Heart left ventricle (tissue), 16 donors: ENCODE measurements at regions of chr2 and their contacts with region 1.

Region 1: DNA sequence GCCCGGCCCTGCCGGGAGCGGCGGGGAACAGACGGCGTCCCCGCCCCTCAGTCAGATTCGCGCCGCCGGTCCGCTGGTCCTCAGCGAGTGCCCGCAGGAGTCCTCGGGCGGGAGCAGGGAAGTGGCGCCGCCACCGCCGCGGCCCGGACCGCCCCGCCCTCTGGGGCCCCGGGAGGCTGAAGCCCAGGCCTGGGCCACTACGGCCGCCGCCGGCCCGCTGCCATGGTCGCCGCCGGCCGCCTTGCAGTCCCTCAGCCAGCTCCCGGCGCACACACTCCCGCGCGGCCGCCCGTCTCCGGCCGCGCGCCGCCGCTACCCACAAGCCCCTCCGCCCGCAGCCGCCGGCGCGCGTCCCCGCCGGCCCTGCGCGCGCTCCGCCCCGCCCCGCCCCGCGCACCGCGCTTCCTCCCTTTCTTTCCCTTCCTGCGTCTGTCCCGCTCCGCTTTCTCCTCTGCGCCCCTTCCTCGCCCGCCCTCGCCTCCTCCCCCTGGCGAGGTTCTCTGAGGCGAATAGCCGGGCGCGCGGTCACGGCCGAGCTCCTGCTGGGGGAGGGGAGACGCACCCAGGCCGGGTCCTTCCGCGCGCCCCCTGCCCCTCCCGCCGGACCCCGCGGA is at the start of gene ROCK2:
- DNase-seq: peak; percentile 90 to 93 (median 91)
- ATAC-seq: peak; percentile 84 to 92 (median 86)
- H3K4me3 ChIP-seq: peak within 1 kb of the TSS; percentile 69 to 100 (median 94)
- H3K27ac ChIP-seq: peak within 1 kb of the TSS; percentile 94 to 100 (median 99)
- H3K4me1 ChIP-seq: peaks cover 7 to 53% (median 36%) of the 10 kb centered on the region in 12 donors
- H3K27me3 ChIP-seq: no peaks in the 10 kb centered on the region
- CTCF ChIP-seq: no peak
- POLR2A ChIP-seq: peak in 1 of 2 donors; percentile 13
- total RNA-seq, gene ROCK2: 25.3 to 44.3 (median 39.0) TPM

Region 2: GRCh38 chr2:11234309-11234708 is 110.1 kb before region 1 on chr2:
- intact Hi-C with region 1: loop called in 7 of 10 experiments (anchors 2 to 10 kb)
- DNase-seq: no peak
- ATAC-seq: peak in 2 of 4 donors; percentile 49 to 59
- H3K4me3 ChIP-seq: no peak overlapping the region
- H3K27ac ChIP-seq: no peak overlapping the region
- H3K4me1 ChIP-seq: peaks cover 0 to 26% (median 12%) of the 10 kb centered on the region in 12 donors
- H3K27me3 ChIP-seq: no peaks in the 10 kb centered on the region
- CTCF ChIP-seq: peak; percentile 35 to 79 (median 62)
- POLR2A ChIP-seq: no peak

Region 3: GRCh38 chr2:11275910-11276309 is 68.5 kb before region 1 on chr2:
- intact Hi-C with region 1: loop called in 2 of 10 experiments (anchors 5 to 10 kb)
- DNase-seq: no peak
- ATAC-seq: no peak
- H3K4me3 ChIP-seq: no peak overlapping the region
- H3K27ac ChIP-seq: no peak overlapping the region
- H3K4me1 ChIP-seq: peaks cover 0 to 13% (median 0%) of the 10 kb centered on the region in 12 donors
- H3K27me3 ChIP-seq: no peaks in the 10 kb centered on the region
- CTCF ChIP-seq: no peak
- POLR2A ChIP-seq: no peak

Region 4: GRCh38 chr2:11368059-11368572 is 23.7 kb after region 1 on chr2:
- intact Hi-C with region 1: loop called in 1 of 10 experiments (anchors 2 kb)
- DNase-seq: peak in 3 of 5 donors; percentile 36 to 55 (median 52)
- ATAC-seq: peak in 3 of 4 donors; percentile 55 to 73 (median 60)
- H3K4me3 ChIP-seq: peak overlapping the region in 8 of 12 donors; percentile 1 to 44 (median 28)
- H3K27ac ChIP-seq: peak overlapping the region; percentile 46 to 81 (median 62)
- H3K4me1 ChIP-seq: peaks cover 0 to 23% (median 9%) of the 10 kb centered on the region in 12 donors
- H3K27me3 ChIP-seq: no peaks in the 10 kb centered on the region
- CTCF ChIP-seq: no peak
- POLR2A ChIP-seq: no peak

Region 5: DNA sequence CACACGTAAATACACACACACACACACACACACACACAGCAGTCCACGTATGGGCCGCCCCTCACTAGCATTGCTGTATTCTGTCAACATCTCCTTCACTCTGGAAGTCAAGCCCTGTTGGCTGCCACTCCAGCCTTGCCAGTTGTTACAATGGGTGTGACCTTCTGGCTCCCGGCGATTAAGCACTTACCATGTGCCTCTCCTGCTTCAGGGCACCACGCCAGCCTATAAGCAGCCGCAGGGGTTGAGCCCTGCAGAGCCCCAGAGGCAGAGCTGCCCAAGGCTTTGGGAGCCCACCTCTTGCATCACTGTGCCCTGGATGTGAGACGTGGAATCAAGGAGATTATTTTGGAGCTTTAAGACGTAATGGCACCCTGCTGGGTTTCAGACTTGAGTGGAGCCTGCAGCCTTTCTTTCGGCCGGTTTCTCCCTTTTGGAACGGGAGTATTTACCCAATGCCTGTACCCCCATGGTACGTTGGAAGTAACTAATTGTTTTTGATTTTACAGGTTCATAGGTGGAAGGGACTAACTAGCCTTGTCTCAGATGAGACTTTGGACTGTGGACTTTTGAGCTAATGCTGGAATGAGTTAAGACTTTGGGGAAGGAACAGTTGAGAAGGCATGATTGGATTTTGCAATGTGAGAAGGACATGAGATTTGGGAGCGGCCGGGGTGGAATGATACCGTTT is 54.4 kb after region 1 on chr2:
- intact Hi-C with region 1: loop called in 4 of 10 experiments (anchors 5 to 10 kb)
- DNase-seq: peak; percentile 51 to 84 (median 78)
- ATAC-seq: peak; percentile 39 to 81 (median 58)
- H3K4me3 ChIP-seq: no peak overlapping the region
- H3K27ac ChIP-seq: no peak overlapping the region
- H3K4me1 ChIP-seq: peaks cover 0 to 44% (median 20%) of the 10 kb centered on the region in 12 donors
- H3K27me3 ChIP-seq: no peaks in the 10 kb centered on the region
- CTCF ChIP-seq: no peak
- POLR2A ChIP-seq: no peak